Natural killer cell (primary cell): ENCODE measurements at regions of chr2 and their contacts with region 1.

Region 1: GRCh38 chr2:79389481-79389880 is 123.4 kb upstream of the CTNNA2 start:
- DNase-seq: no peak
- ATAC-seq: no peak
- H3K4me3 ChIP-seq: no peak overlapping the region
- H3K4me3 Mint-ChIP-seq: no peak overlapping the region
- H3K27ac ChIP-seq: no peak overlapping the region
- H3K27ac Mint-ChIP-seq: no peak overlapping the region
- H3K4me1 ChIP-seq: no peaks in the 10 kb centered on the region
- H3K4me1 Mint-ChIP-seq: no peaks in the 10 kb centered on the region
- H3K27me3 ChIP-seq: no peaks in the 10 kb centered on the region
- H3K27me3 Mint-ChIP-seq: no peaks in the 10 kb centered on the region
- CTCF ChIP-seq: no peak

Region 2: DNA sequence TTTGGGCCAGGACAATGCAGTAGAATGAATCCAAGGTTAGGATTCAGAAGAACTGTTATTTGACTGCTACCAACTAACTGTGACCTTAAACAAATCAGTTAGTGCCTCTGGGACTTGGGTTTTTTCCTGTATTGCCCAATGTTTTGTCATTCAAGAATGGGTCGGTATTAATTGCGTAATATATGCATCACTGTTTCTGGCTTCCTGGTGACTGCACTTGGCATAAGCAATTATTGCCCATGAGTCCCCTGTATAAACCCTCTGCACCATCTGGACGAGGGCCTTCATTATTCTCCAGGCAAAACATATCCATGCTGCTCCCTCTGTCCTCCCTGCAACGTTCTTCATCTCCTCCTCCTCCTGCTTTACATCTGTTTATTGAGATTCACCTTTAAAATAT is 1170.8 kb after region 1 on chr2:
- intact Hi-C with region 1: loop called (anchors 10 kb)
- DNase-seq: no peak
- ATAC-seq: no peak
- H3K4me3 ChIP-seq: no peak overlapping the region
- H3K4me3 Mint-ChIP-seq: no peak overlapping the region
- H3K27ac ChIP-seq: no peak overlapping the region
- H3K27ac Mint-ChIP-seq: no peak overlapping the region
- H3K4me1 ChIP-seq: no peaks in the 10 kb centered on the region
- H3K4me1 Mint-ChIP-seq: no peaks in the 10 kb centered on the region
- H3K27me3 ChIP-seq: no peaks in the 10 kb centered on the region
- H3K27me3 Mint-ChIP-seq: no peaks in the 10 kb centered on the region
- CTCF ChIP-seq: no peak